Left colon (tissue), 2 donors: ENCODE measurements at regions of chr12 and their contacts with region 1.

Region 1: GRCh38 chr12:108562348-108563135 is at the start of gene ISCU:
- DNase-seq: peak; percentile 96 to 97
- ATAC-seq: peak; percentile 79
- total RNA-seq, gene ISCU: 87.2 to 97.3 TPM

Region 2: GRCh38 chr12:108514973-108515814 is 47.3 kb before region 1 on chr12 and contains the start of gene FICD:
- intact Hi-C with region 1: no loop called
- DNase-seq: peak; percentile 100
- ATAC-seq: peak; percentile 95
- total RNA-seq, gene FICD: 4.6 to 5.3 TPM

Region 3: GRCh38 chr12:108618079-108618952 is 55.8 kb after region 1 on chr12:
- intact Hi-C with region 1: loop called (anchors 2 to 5 kb)
- DNase-seq: peak; percentile 71 to 85
- ATAC-seq: peak; percentile 93

Region 4: GRCh38 chr12:108803428-108804105 is 241.0 kb after region 1 on chr12:
- intact Hi-C with region 1: loop called in 1 of 2 experiments (anchors 10 kb)
- DNase-seq: peak; percentile 68 to 76
- ATAC-seq: peak; percentile 89

Region 5: DNA sequence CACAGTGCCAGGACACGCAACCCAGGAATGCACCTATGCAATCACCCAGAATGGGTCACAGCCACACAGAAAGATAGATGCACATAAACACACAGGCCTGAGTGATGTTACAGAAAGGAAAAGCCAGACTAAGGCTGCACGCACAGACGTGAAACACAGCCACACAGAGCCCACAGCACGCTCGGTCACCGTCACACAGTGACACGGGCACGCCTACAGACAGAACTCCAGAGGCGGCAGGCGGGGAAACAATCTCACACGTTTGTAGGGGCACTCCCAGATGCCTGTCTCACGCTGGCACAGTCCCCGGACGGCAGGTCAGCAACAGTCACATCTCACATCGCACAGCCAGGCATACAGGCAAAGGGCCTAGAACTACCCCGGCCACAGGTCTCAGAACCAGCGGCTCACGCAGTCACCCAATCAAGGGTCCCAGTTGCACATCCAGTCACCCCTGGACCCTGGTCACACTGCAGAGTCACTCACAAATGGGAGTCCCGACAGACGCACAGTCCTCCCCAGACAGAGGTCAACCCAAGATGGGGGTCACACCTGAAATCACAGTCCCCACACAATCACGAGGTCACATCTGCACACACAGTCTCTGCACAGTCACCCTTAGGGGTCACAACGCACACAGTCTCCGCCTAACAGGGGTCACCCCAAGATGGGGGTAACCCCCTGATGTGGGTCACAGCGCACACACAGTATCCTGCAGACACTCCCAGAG is 294.1 kb after region 1 on chr12:
- intact Hi-C with region 1: loop called in 1 of 2 experiments (anchors 10 kb)
- DNase-seq: peak; percentile 80 to 81
- ATAC-seq: peak; percentile 68

Region 6: GRCh38 chr12:109093022-109093918 is 530.7 kb after region 1 on chr12 and contains the start of gene ALKBH2:
- intact Hi-C with region 1: loop called in 1 of 2 experiments (anchors 10 kb)
- DNase-seq: peak; percentile 93 to 95
- ATAC-seq: peak; percentile 68
- total RNA-seq, gene ALKBH2: 5.4 to 7.7 TPM